ENCODE measurements at regions of chr19 and their contacts with region 1.

Region 1: DNA sequence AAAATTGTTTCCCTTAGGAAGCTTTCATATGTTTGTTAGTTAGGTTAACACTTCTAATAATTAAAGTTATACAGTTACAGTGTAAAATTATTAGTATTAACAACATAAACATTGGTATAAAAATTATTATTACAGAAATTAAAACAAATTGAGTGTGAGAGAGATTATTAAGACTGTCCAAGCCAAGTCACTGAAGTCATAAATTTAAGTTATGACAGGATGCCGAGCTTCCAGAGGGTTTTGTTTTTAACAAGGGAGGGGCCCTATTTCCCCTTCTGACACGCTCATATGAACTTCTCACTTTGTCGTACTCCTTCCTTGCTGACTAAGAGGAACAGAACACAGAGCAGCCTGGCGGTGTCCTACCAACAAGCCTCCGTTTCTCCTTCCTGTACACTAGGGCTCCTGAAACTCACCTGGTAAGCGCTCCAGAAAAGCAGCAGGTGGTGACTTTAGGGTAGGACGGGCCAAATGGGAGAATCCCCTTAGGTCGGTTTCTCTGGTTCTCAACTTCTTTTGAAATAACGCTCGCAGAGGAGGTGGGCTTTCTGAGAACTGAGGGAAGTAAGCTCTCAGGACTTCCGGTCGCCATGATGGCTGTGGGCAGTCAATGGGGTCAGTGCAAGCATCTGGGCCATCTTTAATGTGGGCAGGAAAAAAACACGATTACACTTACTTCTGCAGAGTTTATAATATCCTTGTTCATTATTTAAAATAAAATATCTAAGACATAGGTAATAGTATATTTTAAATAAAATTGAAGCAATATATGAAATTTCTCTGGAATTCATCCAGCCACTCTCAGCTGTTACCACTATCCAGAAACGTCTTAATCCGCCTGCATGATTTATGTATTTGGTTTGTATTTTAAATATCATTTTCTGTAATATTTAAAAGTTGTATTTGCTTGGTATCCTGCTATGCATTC is at the start of gene CARD8:
- DNase-seq: peak; percentile 72 to 82
- H3K4me3 ChIP-seq: peak within 1 kb of the TSS; percentile 65
- H3K27ac ChIP-seq: peak within 1 kb of the TSS; percentile 93
- H3K4me1 ChIP-seq: peaks cover 32% of the 10 kb centered on the region
- H3K27me3 ChIP-seq: no peaks in the 10 kb centered on the region
- CTCF ChIP-seq: no peak
- total RNA-seq, gene CARD8: 17.7 and 25.6 TPM in 2 replicates

Region 2: GRCh38 chr19:48152551-48152950 is 103.1 kb before region 1 on chr19:
- CTCF ChIA-PET with region 1: no interaction called
- POLR2A ChIA-PET with region 1: no interaction called
- intact Hi-C with region 1: loop called (anchors 5 kb)
- DNase-seq: peak; percentile 46 to 54
- H3K4me3 ChIP-seq: no peak overlapping the region
- H3K27ac ChIP-seq: peak overlapping the region; percentile 32; the same call in 1 of the 2 replicates
- H3K4me1 ChIP-seq: no peaks in the 10 kb centered on the region
- H3K27me3 ChIP-seq: no peaks in the 10 kb centered on the region
- CTCF ChIP-seq: peak; percentile 97

Region 3: GRCh38 chr19:48872182-48872883 is 616.7 kb after region 1 on chr19 and contains the start of gene PPP1R15A:
- CTCF ChIA-PET with region 1: no interaction called
- POLR2A ChIA-PET with region 1: no interaction called
- intact Hi-C with region 1: no loop called
- DNase-seq: peak; percentile 95 to 98
- H3K4me3 ChIP-seq: peak within 1 kb of the TSS; percentile 93
- H3K27ac ChIP-seq: peak within 1 kb of the TSS; percentile 97
- H3K4me1 ChIP-seq: peaks cover 22% of the 10 kb centered on the region
- H3K27me3 ChIP-seq: peaks cover 2% of the 10 kb centered on the region; the same call in 1 of the 2 replicates
- CTCF ChIP-seq: peak; percentile 39; the same call in 1 of the 2 replicates
- total RNA-seq, gene PPP1R15A: 49.5 and 53.6 TPM in 2 replicates